Activated CD4-positive, alpha-beta memory T cell treated with anti-CD3 and anti-CD28 coated beads for 36 hours (primary cell): ENCODE measurements at regions of chr1 and their contacts with region 1.

Region 1: DNA sequence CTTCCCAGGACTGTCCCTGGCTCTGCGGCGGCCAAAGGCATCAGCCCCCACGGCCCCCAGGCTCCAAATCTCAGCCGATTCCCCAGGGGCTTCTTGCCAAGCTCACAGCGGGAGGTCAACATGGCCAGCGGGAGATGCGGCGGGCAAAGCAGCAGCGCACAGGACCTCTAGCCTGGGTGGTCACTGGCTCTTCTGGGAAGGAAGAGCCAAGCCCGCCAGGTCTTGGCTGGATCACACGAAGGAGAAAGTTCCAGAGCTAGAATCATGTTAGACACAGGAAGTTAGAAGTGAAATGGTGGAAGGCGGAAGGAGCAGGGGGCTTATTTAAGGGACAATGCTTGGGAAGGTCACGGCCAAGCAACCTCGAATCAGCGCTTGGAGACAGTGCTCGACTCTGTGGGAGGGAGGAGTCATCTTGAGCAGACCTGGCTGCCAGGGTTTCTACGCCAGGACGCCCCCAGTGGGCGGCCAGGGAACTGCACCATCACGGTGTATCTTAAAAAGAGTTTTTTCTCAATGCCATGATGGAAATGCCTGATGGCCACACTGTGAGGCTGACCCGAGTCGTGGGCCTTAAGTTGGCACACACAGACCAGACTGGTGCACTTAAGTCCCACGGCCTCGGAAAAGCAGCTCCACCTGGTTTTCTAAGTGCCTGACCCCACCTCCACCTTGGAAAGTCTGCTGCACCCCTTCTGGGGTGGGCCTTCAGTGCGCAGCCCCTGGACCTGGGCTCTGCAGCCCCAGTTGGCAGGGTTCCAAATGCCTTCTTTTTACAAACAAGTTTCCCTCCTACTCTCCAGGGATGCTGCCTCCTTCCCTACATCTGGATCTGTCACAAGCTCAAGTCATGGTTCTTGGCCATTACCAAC is 29.3 kb downstream of the SLC66A1 start:
- DNase-seq: peak; percentile 86
- H3K4me3 Mint-ChIP-seq: no peak overlapping the region
- H3K27ac Mint-ChIP-seq: peak overlapping the region; percentile 0
- H3K4me1 Mint-ChIP-seq: peaks cover 18% of the 10 kb centered on the region
- H3K27me3 Mint-ChIP-seq: no peaks in the 10 kb centered on the region

Region 2: DNA sequence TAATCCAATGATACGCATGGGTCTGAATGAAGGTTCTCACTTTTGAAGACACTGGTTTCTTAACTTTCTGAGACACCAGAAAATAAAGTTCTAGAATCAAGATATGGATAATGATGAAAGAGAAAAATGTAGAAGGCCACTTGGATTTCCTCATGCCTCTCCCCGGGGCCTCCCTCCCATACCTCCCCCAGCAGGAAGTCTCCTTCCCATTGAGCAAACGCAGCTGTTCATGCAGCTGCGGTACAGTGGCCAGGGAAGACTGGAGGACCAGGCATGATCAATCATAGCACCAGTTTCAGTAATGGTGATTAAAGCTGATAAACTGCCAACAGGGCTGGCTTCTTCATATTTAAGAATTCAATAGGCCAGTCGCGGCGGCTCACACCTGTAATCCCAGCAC is 120.4 kb before region 1 on chr1:
- CTCF ChIA-PET with region 1: no interaction called
- POLR2A ChIA-PET with region 1: no interaction called
- intact Hi-C with region 1: no loop called
- DNase-seq: no peak
- H3K4me3 Mint-ChIP-seq: no peak overlapping the region
- H3K27ac Mint-ChIP-seq: no peak overlapping the region
- H3K4me1 Mint-ChIP-seq: peaks cover 15% of the 10 kb centered on the region
- H3K27me3 Mint-ChIP-seq: no peaks in the 10 kb centered on the region

Region 3: GRCh38 chr1:19251305-19252196 is 89.9 kb before region 1 on chr1 and contains the starts of genes EMC1 and MRTO4:
- CTCF ChIA-PET with region 1: interaction called, 3 read pairs
- POLR2A ChIA-PET with region 1: interaction called, 3 read pairs
- intact Hi-C with region 1: loop called (anchors 5 kb)
- DNase-seq: peak; percentile 92
- H3K4me3 Mint-ChIP-seq: peak within 1 kb of the TSS; percentile 98
- H3K27ac Mint-ChIP-seq: peak within 1 kb of the TSS; percentile 95
- H3K4me1 Mint-ChIP-seq: peaks cover 43% of the 10 kb centered on the region
- H3K27me3 Mint-ChIP-seq: no peaks in the 10 kb centered on the region
- total RNA-seq, gene EMC1: 46.6 to 49.3 TPM
- total RNA-seq, gene MRTO4: 83.0 to 83.8 TPM

Region 4: GRCh38 chr1:19353596-19353995 is 12.2 kb after region 1 on chr1:
- CTCF ChIA-PET with region 1: interaction called, 13 read pairs
- POLR2A ChIA-PET with region 1: no interaction called
- intact Hi-C with region 1: no loop called
- DNase-seq: no peak
- H3K4me3 Mint-ChIP-seq: no peak overlapping the region
- H3K27ac Mint-ChIP-seq: peak overlapping the region; percentile 33
- H3K4me1 Mint-ChIP-seq: no peaks in the 10 kb centered on the region
- H3K27me3 Mint-ChIP-seq: no peaks in the 10 kb centered on the region

Region 5: DNA sequence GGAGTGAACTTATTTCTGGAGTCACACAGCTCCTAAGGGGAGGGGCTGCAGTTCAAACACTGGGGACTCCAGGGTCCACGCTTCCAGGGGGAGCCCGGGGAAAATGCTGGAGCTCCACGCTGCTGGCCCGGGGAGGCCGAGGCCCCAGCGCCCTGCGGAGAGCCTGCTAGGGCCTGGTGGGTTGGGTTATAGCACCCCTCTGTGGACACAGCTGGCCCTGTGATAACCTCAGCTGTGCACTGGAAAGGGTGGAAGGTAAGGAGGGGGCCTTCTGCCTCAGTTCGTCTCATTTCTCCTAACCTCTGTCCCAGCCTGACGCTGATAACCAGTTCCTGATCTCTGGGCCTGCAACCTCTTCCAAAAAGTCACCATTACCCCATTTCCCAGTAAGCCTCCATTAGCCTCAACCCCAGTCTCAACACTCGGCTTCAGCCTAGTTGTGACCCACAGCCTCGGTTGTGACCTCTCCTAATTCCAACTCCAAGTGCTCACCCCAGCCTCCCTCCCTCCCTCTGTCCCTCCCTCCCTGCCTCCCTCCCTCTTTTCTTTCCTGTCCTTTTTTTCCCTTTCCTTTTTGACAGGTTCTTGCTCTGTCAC is 309.8 kb after region 1 on chr1:
- CTCF ChIA-PET with region 1: interaction called, 20 read pairs
- POLR2A ChIA-PET with region 1: no interaction called
- intact Hi-C with region 1: loop called (anchors 1 kb)
- DNase-seq: peak; percentile 71
- H3K4me3 Mint-ChIP-seq: no peak overlapping the region
- H3K27ac Mint-ChIP-seq: no peak overlapping the region
- H3K4me1 Mint-ChIP-seq: peaks cover 34% of the 10 kb centered on the region
- H3K27me3 Mint-ChIP-seq: no peaks in the 10 kb centered on the region